ENCODE measurements at regions of chr3 and their contacts with region 1.

Region 1: GRCh38 chr3:63008482-63008881 is 133.3 kb upstream of the CADPS start:
- DNase-seq: no peak
- ATAC-seq: no peak
- H3K4me3 ChIP-seq: no peak overlapping the region
- H3K27ac ChIP-seq: no peak overlapping the region
- H3K4me1 ChIP-seq: no peaks in the 10 kb centered on the region
- H3K27me3 ChIP-seq: no peaks in the 10 kb centered on the region
- CTCF ChIP-seq: no peak

Region 2: DNA sequence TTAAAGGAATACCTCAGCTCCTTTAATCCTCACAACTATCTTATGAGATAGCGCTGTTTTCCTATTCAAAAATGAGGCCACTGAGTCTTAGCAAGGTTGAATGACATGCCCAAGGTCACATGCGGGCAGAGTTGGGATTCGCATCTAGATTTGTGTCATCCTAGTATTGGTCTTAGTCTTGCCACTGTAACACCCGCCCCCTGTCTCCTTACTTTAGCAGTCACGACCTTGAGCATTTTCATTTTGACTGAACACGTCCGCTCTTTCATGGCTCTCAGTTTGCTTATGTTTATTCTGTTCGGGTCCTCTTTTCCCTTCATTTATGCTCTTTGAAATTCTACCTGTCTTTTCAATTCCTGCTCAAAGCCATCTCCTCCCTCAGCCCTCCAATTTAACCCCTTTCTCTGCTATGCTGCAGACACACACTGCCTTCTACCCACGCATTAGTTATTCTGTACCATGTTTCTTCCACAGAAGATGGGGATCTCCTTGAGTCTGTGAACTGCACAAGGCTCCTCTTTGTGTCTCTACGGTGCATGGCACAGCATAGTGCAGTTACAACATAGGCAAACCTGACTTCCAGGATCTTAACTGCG is 20.7 kb before region 1 on chr3:
- CTCF ChIA-PET with region 1: no interaction called
- POLR2A ChIA-PET with region 1: no interaction called
- in situ Hi-C with region 1: no loop called
- intact Hi-C with region 1: loop called (anchors 2 kb)
- DNase-seq: no peak
- ATAC-seq: no peak
- H3K4me3 ChIP-seq: no peak overlapping the region
- H3K27ac ChIP-seq: no peak overlapping the region
- H3K4me1 ChIP-seq: no peaks in the 10 kb centered on the region
- H3K27me3 ChIP-seq: no peaks in the 10 kb centered on the region
- CTCF ChIP-seq: no peak